CD4-positive, alpha-beta T cell (primary cell): ENCODE measurements at regions of chr19 and their contacts with region 1.

Region 1: GRCh38 chr19:53892981-53893325 is 11.0 kb downstream of the PRKCG start:
- DNase-seq: no peak
- ATAC-seq: no peak
- H3K4me3 ChIP-seq: no peak overlapping the region
- H3K4me3 Mint-ChIP-seq: no peak overlapping the region
- H3K27ac ChIP-seq: no peak overlapping the region
- H3K27ac Mint-ChIP-seq: no peak overlapping the region
- H3K4me1 ChIP-seq: peaks cover 7% of the 10 kb centered on the region
- H3K4me1 Mint-ChIP-seq: no peaks in the 10 kb centered on the region
- H3K27me3 ChIP-seq: peaks cover 28% of the 10 kb centered on the region in 2 experiments
- H3K27me3 Mint-ChIP-seq: peaks cover 56% of the 10 kb centered on the region
- CTCF ChIP-seq: no peak

Region 2: DNA sequence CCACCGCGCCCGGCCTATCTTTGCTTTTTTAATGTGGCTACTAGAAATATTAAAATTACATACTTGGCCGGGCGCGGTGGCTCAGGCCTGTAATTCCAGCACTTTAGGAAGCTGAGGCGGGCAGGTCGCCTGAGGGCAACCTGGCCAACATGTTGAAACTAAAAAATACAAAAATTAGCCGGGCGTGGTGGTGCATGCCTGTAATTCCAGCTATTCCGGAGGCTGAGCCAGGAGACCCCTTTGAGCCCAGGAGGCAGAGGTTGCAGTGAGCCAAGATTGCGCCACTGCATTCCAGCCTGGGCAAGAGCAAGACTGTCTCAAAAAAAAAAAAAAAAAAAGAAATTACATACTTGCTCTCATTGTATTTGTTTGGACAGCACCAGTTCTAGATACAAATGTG is 295.9 kb before region 1 on chr19:
- CTCF ChIA-PET with region 1: no interaction called
- POLR2A ChIA-PET with region 1: no interaction called
- intact Hi-C with region 1: loop called in 1 of 2 experiments (anchors 10 kb)
- DNase-seq: no peak
- ATAC-seq: no peak
- H3K4me3 ChIP-seq: no peak overlapping the region
- H3K4me3 Mint-ChIP-seq: no peak overlapping the region
- H3K27ac ChIP-seq: no peak overlapping the region
- H3K27ac Mint-ChIP-seq: no peak overlapping the region
- H3K4me1 ChIP-seq: no peaks in the 10 kb centered on the region
- H3K4me1 Mint-ChIP-seq: no peaks in the 10 kb centered on the region
- H3K27me3 ChIP-seq: no peaks in the 10 kb centered on the region
- H3K27me3 Mint-ChIP-seq: no peaks in the 10 kb centered on the region
- CTCF ChIP-seq: no peak